ENCODE measurements at regions of chr14 and their contacts with region 1.

Region 1: GRCh38 chr14:77067632-77068514 is 30.2 kb upstream of the CIPC start:
- DNase-seq: peak; percentile 72
- ATAC-seq: peak; percentile 83
- H3K4me3 Mint-ChIP-seq: no peak overlapping the region
- H3K27ac Mint-ChIP-seq: no peak overlapping the region
- H3K4me1 Mint-ChIP-seq: peaks cover 9% of the 10 kb centered on the region
- H3K27me3 Mint-ChIP-seq: peaks cover 11% of the 10 kb centered on the region

Region 2: DNA sequence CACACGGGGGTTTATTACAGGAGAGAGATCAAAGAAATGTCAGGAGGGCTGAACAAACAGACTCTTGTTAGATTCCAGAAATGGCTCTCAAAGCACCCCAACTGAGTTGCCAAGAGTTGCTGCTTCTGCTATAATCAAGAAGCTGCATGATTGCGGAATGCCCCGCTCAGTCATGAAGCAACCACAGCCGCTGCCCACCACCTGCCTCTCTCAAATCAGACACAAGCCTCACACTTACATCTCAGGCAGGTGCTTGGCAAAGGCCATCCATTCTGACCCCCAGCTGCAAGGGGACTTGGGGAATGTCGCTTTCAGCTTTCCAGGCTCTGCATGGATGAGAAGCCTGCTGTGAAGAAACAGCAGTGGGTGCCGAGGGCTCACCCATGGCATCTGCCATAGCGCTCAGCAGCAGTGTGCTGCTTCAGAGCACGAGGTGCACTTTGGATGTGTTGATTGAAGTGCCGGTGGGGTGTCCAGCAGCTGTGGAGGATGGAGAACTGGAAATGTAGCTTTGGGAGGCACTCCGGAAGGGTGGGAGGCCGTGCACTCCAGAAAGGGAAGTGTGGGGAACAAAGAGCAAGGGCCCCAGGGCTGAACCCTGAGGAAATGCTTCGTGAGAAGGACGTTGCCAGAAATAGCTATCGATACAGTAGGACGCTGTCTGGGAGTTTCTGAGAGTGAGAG is 204.0 kb before region 1 on chr14:
- CTCF ChIA-PET with region 1: interaction called, 21 read pairs
- POLR2A ChIA-PET with region 1: no interaction called
- DNase-seq: no peak
- ATAC-seq: no peak
- H3K4me3 Mint-ChIP-seq: no peak overlapping the region
- H3K27ac Mint-ChIP-seq: no peak overlapping the region
- H3K4me1 Mint-ChIP-seq: peaks cover 28% of the 10 kb centered on the region
- H3K27me3 Mint-ChIP-seq: peaks cover 15% of the 10 kb centered on the region

Region 3: DNA sequence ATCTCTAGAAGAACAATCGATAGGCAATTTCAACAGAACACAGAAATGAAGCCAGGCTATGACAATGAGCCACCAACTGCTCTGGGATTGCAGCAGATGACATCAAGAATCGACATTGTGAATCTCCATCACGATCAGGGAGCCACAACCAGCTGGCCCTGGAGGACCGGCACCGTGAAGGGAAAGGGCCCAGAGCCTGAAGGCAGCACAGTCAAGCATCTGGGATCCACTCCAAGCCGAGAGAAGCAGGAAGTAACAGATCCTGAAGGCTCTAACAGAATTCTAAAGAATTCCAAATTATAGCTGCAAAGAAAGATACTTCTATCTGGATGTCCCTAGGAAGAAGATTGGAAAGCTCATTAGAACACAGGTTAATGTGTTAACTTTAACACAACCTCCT is 180.7 kb before region 1 on chr14:
- CTCF ChIA-PET with region 1: interaction called, 20 read pairs
- POLR2A ChIA-PET with region 1: no interaction called
- DNase-seq: no peak
- ATAC-seq: no peak
- H3K4me3 Mint-ChIP-seq: no peak overlapping the region
- H3K27ac Mint-ChIP-seq: no peak overlapping the region
- H3K4me1 Mint-ChIP-seq: peaks cover 18% of the 10 kb centered on the region
- H3K27me3 Mint-ChIP-seq: peaks cover 7% of the 10 kb centered on the region

Region 4: GRCh38 chr14:77053046-77053841 is 14.6 kb before region 1 on chr14:
- CTCF ChIA-PET with region 1: interaction called, 16 read pairs
- POLR2A ChIA-PET with region 1: interaction called, 3 read pairs
- DNase-seq: peak; percentile 85
- ATAC-seq: peak; percentile 96
- H3K4me3 Mint-ChIP-seq: no peak overlapping the region
- H3K27ac Mint-ChIP-seq: peak overlapping the region; percentile 68
- H3K4me1 Mint-ChIP-seq: peaks cover 28% of the 10 kb centered on the region
- H3K27me3 Mint-ChIP-seq: no peaks in the 10 kb centered on the region

Region 5: GRCh38 chr14:77097700-77098528 is 30.0 kb after region 1 on chr14 and contains the start of gene CIPC:
- CTCF ChIA-PET with region 1: interaction called, 62 read pairs
- POLR2A ChIA-PET with region 1: no interaction called
- DNase-seq: peak; percentile 100
- ATAC-seq: peak; percentile 94
- H3K4me3 Mint-ChIP-seq: peak within 1 kb of the TSS; percentile 84
- H3K27ac Mint-ChIP-seq: peak within 1 kb of the TSS; percentile 93
- H3K4me1 Mint-ChIP-seq: peaks cover 31% of the 10 kb centered on the region
- H3K27me3 Mint-ChIP-seq: peaks cover 4% of the 10 kb centered on the region
- total RNA-seq, gene CIPC: 11.4 to 11.7 TPM